Breast epithelium (tissue), 4 donors: ENCODE measurements at regions of chr6 and their contacts with region 1.

Region 1: DNA sequence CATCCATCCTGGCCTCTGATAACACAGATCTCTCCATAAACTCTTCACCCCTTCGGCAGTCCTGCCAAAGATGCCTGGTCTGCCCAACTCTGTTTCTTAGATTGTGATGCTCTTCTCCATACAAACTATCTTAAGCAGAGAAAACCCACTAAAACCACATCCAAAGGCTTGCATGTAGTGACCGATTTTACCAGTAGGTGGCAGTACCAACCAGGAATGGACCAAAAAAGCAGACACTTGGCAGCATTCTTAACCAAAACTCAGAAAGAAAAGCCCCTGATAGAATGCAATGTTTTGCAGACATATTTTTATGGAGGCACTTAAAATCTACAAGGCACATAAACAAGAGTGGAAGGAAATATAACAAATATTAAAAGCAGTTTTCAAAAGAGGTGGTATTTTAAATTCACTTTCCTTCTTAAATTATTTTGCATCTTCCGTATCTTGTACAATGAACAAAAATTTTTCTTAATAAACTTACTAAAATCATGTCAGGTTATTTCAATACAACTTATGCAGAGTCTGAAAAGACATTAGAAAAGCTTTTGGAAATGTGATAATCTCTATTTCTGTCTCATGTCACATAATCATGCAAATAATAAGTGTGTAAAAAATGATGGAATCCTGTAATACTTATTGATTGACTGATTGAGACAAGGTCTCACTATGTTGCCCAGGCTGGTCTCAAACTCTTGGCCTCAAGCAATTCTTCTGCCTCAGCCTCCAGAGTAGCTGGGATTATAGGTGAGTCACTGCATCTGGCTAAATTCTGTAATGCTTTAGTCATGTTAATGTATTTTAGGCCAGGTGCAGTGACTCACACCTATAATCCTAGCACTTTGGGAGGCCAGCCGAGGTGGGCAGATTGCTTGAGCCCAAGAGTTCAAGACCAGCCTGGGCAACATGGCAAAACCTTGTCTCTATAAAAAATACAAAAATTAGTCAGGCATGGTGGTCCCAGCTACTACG is 29.4 kb downstream of the LRP11 start:
- DNase-seq: peak in 1 of 2 donors; percentile 46
- H3K4me3 ChIP-seq: no peak overlapping the region
- H3K27ac ChIP-seq: no peak overlapping the region
- H3K4me1 ChIP-seq: no peaks in the 10 kb centered on the region
- H3K27me3 ChIP-seq: no peaks in the 10 kb centered on the region
- CTCF ChIP-seq: peak; percentile 86 to 95 (median 92)
- POLR2A ChIP-seq: no peak

Region 2: DNA sequence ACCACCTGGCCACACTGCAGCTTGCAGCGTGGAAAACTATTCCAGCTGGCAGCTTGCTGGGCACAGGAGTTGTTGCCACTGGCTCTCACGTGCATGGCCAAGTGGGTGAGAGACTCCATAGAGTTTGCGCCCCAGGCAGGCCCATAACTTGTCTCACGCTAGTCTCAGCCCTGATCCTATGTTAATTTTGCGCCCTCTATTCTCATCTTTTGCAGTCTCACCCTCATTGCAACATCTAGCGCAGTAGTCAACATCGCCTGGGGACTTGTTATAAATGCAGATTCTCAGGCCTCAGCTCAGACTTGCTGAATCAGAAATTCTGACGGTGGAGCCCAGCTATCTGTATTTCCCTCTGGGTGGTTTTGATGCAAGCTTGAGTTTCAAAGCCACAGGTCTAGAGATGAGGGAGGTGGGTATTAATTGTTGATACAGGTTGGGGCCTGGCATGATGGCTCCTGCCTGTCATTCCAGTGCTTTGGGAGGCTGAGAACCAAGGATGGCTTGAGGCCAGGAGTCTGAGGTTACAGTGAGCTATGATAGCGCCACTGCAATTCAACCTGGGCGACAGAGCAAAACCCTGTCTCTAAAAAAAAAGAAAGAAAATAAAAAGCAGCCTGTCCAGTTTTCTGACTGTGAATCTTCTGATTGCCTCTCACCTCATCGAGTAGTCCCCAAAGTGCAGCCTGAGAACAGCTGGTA is 1677.1 kb before region 1 on chr6:
- intact Hi-C with region 1: no loop called
- DNase-seq: peak in 1 of 2 donors; percentile 35
- H3K4me3 ChIP-seq: no peak overlapping the region
- H3K27ac ChIP-seq: no peak overlapping the region
- H3K4me1 ChIP-seq: no peaks in the 10 kb centered on the region
- H3K27me3 ChIP-seq: no peaks in the 10 kb centered on the region
- CTCF ChIP-seq: no peak
- POLR2A ChIP-seq: no peak

Region 3: GRCh38 chr6:149884215-149884614 is 49.4 kb after region 1 on chr6:
- intact Hi-C with region 1: no loop called
- DNase-seq: no peak
- H3K4me3 ChIP-seq: no peak overlapping the region
- H3K27ac ChIP-seq: no peak overlapping the region
- H3K4me1 ChIP-seq: no peaks in the 10 kb centered on the region
- H3K27me3 ChIP-seq: no peaks in the 10 kb centered on the region
- CTCF ChIP-seq: no peak
- POLR2A ChIP-seq: no peak

Region 4: DNA sequence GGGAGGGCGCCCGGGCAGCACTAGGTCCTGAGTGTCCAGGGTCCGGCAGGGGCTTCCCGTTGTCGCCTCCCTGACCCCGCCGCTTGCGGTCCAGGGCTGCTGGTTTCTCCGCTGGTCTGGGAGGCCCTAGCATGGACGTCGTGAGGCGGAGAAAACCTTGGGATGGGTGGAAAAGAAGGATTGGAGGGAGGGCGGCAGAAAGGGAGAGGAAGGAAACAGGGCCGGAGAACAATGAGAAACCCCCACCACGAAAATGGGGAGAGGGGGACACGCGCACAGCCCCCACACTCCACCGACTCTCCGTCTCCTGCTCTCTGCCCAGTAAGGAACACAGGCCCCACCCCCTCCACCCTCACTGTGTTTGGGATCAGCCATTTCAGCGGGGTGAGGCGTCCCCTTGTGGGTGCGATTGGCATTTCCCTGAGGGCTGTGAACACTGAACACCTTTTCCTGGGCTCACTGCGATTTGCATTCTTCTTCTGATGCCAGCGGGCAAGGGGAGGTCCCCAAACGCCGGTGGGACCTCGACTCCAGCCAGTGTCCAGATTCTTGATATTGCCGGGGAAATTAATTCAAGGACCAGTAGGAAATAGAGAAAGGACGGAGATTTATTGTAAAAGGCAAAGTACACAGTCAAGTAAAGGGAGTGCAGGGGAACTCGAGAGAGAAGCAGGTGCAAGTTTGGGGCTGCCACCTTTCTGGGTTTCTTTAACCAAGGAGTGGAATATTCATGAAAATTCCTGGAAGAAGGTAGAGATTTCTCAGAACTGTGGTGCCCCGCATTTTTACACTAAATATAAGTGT is 91.4 kb after region 1 on chr6:
- intact Hi-C with region 1: loop called (anchors 5 kb)
- DNase-seq: peak; percentile 90 to 92
- H3K4me3 ChIP-seq: peak overlapping the region; percentile 43 to 66 (median 59)
- H3K27ac ChIP-seq: peak overlapping the region; percentile 66 to 68
- H3K4me1 ChIP-seq: peaks cover 0 to 4% of the 10 kb centered on the region in 2 donors
- H3K27me3 ChIP-seq: no peaks in the 10 kb centered on the region
- CTCF ChIP-seq: peak; percentile 97 to 99 (median 99)
- POLR2A ChIP-seq: no peak